ENCODE measurements at regions of chrX and their contacts with region 1.

Region 1: DNA sequence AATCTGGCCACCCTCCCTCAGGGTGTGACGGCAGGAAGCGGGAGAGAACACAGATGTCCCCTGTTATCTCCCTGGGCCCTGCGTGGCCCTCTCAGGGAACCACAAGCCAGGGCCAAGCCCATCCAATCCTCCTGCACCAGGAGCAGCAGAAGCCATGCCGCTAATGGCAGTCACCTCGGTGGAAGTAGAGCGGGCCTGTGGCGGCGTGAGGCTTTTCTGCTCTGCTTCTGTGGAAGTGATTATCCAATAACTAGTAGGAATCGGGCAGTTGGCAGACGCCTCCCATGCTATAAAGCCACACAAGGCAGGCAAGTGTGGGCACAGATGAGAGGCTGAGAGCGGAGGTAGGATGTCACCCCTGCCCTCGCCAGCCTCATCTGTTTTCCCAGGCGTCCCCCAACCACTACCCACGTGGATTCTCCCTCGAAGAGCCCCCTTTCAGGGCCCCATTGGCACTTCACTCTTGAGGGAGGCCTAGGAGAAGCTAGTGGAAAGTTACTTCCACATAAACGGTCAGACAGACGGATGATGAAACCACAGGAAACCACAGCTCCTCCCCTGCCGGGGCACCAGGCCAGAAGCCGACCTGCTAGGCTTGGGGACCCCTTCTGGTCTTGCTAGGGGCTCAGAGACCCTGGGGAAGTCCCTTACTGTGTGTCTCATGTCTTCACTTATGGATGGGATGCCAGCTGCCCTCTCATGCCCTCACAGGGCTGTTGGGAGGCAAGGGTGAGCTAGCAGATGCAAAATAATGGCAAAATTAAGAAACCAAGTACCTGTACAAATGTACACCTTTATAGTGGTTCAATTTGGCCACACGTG is 18.8 kb upstream of the TMSB4X start:
- DNase-seq: peak; percentile 60
- H3K4me3 Mint-ChIP-seq: peak overlapping the region; percentile 86
- H3K27ac Mint-ChIP-seq: peak overlapping the region; percentile 99
- H3K4me1 Mint-ChIP-seq: peaks cover 79% of the 10 kb centered on the region
- H3K27me3 Mint-ChIP-seq: no peaks in the 10 kb centered on the region

Region 2: GRCh38 chrX:12865359-12865758 is 90.7 kb before region 1 on chrX:
- intact Hi-C with region 1: no loop called
- DNase-seq: no peak
- H3K4me3 Mint-ChIP-seq: no peak overlapping the region
- H3K27ac Mint-ChIP-seq: no peak overlapping the region
- H3K4me1 Mint-ChIP-seq: peaks cover 11% of the 10 kb centered on the region
- H3K27me3 Mint-ChIP-seq: no peaks in the 10 kb centered on the region

Region 3: GRCh38 chrX:12966151-12966550 is 10.1 kb after region 1 on chrX:
- intact Hi-C with region 1: loop called (anchors 1 kb)
- DNase-seq: no peak
- H3K4me3 Mint-ChIP-seq: peak overlapping the region; percentile 30
- H3K27ac Mint-ChIP-seq: peak overlapping the region; percentile 70
- H3K4me1 Mint-ChIP-seq: peaks cover 65% of the 10 kb centered on the region
- H3K27me3 Mint-ChIP-seq: no peaks in the 10 kb centered on the region

Region 4: DNA sequence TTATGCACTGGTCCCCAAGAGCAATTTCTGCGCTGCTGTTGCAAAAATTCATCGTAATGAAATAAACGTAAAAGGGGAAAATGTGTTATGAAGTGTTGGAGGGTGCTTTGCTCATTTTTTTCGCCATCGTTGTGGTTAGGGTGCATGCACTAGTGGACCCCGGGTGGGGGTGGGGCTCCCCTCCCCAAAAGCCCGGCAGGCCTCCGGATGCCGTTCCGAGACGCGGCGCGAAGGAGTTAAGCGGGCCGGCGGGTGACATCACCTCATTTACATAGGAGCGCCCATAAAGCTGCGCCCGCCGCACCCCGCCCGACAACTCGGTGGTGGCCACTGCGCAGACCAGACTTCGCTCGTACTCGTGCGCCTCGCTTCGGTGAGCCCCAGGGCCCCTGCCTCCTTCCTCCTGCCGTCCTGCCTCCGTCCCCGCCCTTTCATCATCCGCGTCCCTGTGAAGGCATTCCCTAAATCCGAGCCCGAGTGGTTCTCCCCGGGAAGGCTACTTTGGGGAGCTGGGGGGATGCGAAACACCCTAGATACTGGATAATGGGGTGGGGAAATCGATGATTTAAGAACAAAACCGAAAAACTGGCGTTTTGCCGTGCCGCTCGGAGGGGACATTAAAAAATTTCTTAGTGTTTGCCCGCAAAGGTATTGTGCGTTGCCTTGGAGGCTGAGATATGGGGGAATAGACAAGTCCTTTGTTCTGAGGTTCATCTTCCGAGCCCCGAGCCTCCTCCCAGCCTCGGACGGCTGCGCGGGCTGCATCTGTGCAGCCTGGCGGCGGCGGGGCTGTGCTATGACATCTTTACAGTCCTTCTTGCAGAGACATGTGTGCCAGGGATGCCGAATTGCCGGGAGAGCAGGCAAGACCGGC is 18.9 kb after region 1 on chrX and contains the start of gene TMSB4X:
- intact Hi-C with region 1: loop called (anchors 1 kb)
- DNase-seq: peak; percentile 83
- H3K4me3 Mint-ChIP-seq: peak within 1 kb of the TSS; percentile 97
- H3K27ac Mint-ChIP-seq: peak within 1 kb of the TSS; percentile 98
- H3K4me1 Mint-ChIP-seq: peaks cover 50% of the 10 kb centered on the region
- H3K27me3 Mint-ChIP-seq: no peaks in the 10 kb centered on the region
- total RNA-seq, gene TMSB4X: 6,544 and 6,612 TPM in 2 replicates

Region 5: GRCh38 chrX:13151828-13152510 is 195.9 kb after region 1 on chrX:
- intact Hi-C with region 1: loop called (anchors 5 kb)
- DNase-seq: peak; percentile 34
- H3K4me3 Mint-ChIP-seq: peak overlapping the region; percentile 66
- H3K27ac Mint-ChIP-seq: peak overlapping the region; percentile 71
- H3K4me1 Mint-ChIP-seq: peaks cover 14% of the 10 kb centered on the region
- H3K27me3 Mint-ChIP-seq: no peaks in the 10 kb centered on the region

Measured in activated T-helper 1 cell treated with anti-CD3 and anti-CD28 coated beads, Interleukin-12 subunit alpha, Interleukin-12 subunit beta, Interleukin-2, Interleukin-4 antibody, amounts not matched to agents 30 ng/mL and 10 ng/mL and 1 ng/mL, durations not matched to agents 14 hours and 24 hours and 36 hours (primary cell).